Heart right ventricle (tissue), 16 donors: ENCODE measurements at regions of chr20 and their contacts with region 1.

Region 1: GRCh38 chr20:24816907-24817306 is 132.2 kb upstream of the CST7 start:
- DNase-seq: no peak
- ATAC-seq: no peak
- H3K4me3 ChIP-seq: no peak overlapping the region
- H3K27ac ChIP-seq: no peak overlapping the region
- H3K4me1 ChIP-seq: no peaks in the 10 kb centered on the region
- H3K27me3 ChIP-seq: peaks cover 0 to 5% (median 0%) of the 10 kb centered on the region in 7 donors
- CTCF ChIP-seq: no peak

Region 2: GRCh38 chr20:24683676-24684075 is 133.2 kb before region 1 on chr20:
- intact Hi-C with region 1: no loop called
- DNase-seq: no peak
- ATAC-seq: no peak
- H3K4me3 ChIP-seq: no peak overlapping the region
- H3K27ac ChIP-seq: no peak overlapping the region
- H3K4me1 ChIP-seq: no peaks in the 10 kb centered on the region
- H3K27me3 ChIP-seq: no peaks in the 10 kb centered on the region
- CTCF ChIP-seq: no peak

Region 3: GRCh38 chr20:24872291-24873024 is 55.6 kb after region 1 on chr20:
- intact Hi-C with region 1: loop called in 1 of 10 experiments (anchors 10 kb)
- DNase-seq: no peak
- ATAC-seq: peak in 1 of 8 donors; percentile 28
- H3K4me3 ChIP-seq: no peak overlapping the region
- H3K27ac ChIP-seq: no peak overlapping the region
- H3K4me1 ChIP-seq: no peaks in the 10 kb centered on the region
- H3K27me3 ChIP-seq: peaks cover 0 to 16% (median 11%) of the 10 kb centered on the region in 7 donors
- CTCF ChIP-seq: no peak

Region 4: DNA sequence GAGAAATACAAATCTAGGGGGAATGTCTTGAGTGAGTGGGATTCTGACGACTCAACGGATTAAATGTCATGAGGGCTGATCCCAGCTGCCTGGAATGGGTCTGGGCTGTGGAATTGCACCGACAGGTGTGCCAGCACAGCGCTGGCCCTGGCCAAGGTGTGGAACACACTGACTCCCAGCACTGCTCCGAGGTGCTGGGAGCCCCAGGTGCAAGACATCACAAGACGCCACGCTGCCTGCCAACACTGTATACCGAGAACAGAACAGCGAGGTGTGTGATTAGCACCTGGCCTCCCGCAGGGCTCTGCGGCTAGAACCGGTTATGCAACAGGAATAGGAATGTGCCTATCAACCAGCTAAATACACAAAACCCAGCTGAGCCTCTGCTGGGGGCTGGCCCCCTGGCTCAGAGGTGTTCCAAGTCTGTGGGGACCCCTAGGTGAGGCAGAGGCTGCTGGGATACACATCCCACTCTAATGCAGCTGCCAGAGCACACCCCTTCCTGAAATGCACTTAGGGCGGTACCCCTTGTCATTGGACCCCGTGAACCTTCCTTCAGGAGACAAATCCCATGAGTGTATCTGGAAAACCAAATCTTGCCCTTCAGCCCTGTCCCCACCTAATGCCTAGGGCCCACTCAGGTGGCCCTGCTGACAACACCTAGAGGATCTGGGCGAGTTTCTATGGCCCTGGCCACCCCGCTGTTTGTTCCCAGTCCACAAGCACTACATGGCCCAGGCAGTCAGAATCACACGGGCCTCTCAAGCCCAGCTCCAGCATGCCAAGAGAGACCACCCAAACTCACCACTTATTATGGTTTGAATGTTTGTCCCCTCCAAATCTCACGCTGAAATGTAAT is 200.6 kb after region 1 on chr20:
- intact Hi-C with region 1: no loop called
- DNase-seq: no peak
- ATAC-seq: no peak
- H3K4me3 ChIP-seq: no peak overlapping the region
- H3K27ac ChIP-seq: no peak overlapping the region
- H3K4me1 ChIP-seq: peaks cover 0 to 30% (median 8%) of the 10 kb centered on the region in 9 donors
- H3K27me3 ChIP-seq: no peaks in the 10 kb centered on the region
- CTCF ChIP-seq: no peak